GM18951 (cell line): ENCODE measurements at regions of chr20 and their contacts with region 1.

Region 1: GRCh38 chr20:23794841-23795240 is 31.7 kb downstream of the CST2 start:
- POLR2A ChIP-seq: no peak

Region 2: GRCh38 chr20:23995905-23996666 is 201.2 kb after region 1 on chr20:
- in situ Hi-C with region 1: loop called (anchors 10 kb)
- POLR2A ChIP-seq: no peak